ENCODE measurements at regions of chr2 and their contacts with region 1.

Region 1: GRCh38 chr2:235045336-235045972 is 93.6 kb downstream of the SH3BP4 start:
- DNase-seq: peak; percentile 89
- ATAC-seq: peak; percentile 78
- H3K4me3 ChIP-seq: peak overlapping the region in 2 of 5 experiments; percentile 29
- H3K4me3 Mint-ChIP-seq: peak overlapping the region; percentile 81
- H3K27ac ChIP-seq: peak overlapping the region; percentile 79 to 80
- H3K27ac Mint-ChIP-seq: peak overlapping the region; percentile 81
- H3K4me1 ChIP-seq: peaks cover 38 to 50% of the 10 kb centered on the region in 2 donors
- H3K4me1 Mint-ChIP-seq: peaks cover 48% of the 10 kb centered on the region
- H3K27me3 ChIP-seq: no peaks in the 10 kb centered on the region
- H3K27me3 Mint-ChIP-seq: no peaks in the 10 kb centered on the region
- CTCF ChIP-seq: no peak

Region 2: GRCh38 chr2:233867993-233868532 is 1177.4 kb before region 1 on chr2 and contains the start of gene MSL3B:
- CTCF ChIA-PET with region 1: no interaction called
- POLR2A ChIA-PET with region 1: no interaction called
- intact Hi-C with region 1: loop called (anchors 10 kb)
- DNase-seq: peak; percentile 80
- ATAC-seq: peak; percentile 78
- H3K4me3 ChIP-seq: peak within 1 kb of the TSS; percentile 58 to 82 (median 63)
- H3K4me3 Mint-ChIP-seq: peak within 1 kb of the TSS; percentile 94
- H3K27ac ChIP-seq: peak within 1 kb of the TSS; percentile 25 to 61
- H3K27ac Mint-ChIP-seq: peak within 1 kb of the TSS; percentile 85
- H3K4me1 ChIP-seq: peaks cover 0 to 6% of the 10 kb centered on the region in 2 donors
- H3K4me1 Mint-ChIP-seq: peaks cover 15% of the 10 kb centered on the region
- H3K27me3 ChIP-seq: peaks cover 0 to 4% (median under 1%) of the 10 kb centered on the region in 4 experiments
- H3K27me3 Mint-ChIP-seq: peaks cover 11% of the 10 kb centered on the region
- CTCF ChIP-seq: no peak

Region 3: DNA sequence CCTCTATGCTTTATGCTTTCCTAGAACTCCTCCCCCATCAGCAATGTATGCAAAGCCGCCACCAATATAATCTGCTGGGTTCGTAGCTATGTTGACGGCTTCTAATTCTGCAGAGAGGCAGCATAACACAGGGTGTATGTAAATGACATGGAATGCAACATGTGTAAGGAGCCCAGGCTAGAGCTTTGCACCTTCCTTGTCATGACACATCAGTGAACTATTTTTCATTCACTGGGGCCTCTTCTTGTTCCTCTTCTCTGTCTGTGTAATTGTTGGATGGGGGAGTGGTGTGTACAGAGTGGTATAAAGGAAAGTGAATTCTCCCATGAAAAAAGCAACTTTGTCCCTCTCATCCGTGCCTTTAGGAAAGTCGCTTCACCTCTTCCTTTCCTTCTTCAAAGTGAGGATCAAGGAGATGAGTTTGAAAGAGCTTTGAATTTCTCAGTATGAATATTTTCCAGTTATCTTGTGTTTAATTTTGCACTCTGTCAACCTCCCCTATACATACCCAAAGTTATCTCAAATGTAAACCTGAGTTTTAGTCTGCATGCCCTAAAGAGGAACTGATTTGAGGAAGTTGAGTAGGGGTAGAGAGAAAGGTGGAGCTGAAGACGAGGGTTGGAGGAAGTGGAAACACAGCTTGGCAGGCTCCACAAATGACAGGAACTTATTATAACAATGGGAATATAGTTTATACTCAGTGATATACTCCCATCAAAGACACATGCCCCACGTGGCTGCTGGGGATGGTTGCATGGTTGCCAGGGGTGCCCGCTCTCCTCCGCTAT is 473.6 kb before region 1 on chr2:
- CTCF ChIA-PET with region 1: no interaction called
- POLR2A ChIA-PET with region 1: no interaction called
- intact Hi-C with region 1: loop called (anchors 5 kb)
- DNase-seq: peak; percentile 73
- ATAC-seq: peak; percentile 90
- H3K4me3 ChIP-seq: peak overlapping the region in 2 of 5 experiments; percentile 10 to 26
- H3K4me3 Mint-ChIP-seq: peak overlapping the region; percentile 71
- H3K27ac ChIP-seq: peak overlapping the region; percentile 43 to 67
- H3K27ac Mint-ChIP-seq: peak overlapping the region; percentile 84
- H3K4me1 ChIP-seq: peaks cover 55 to 69% of the 10 kb centered on the region in 2 donors
- H3K4me1 Mint-ChIP-seq: peaks cover 72% of the 10 kb centered on the region
- H3K27me3 ChIP-seq: no peaks in the 10 kb centered on the region
- H3K27me3 Mint-ChIP-seq: no peaks in the 10 kb centered on the region
- CTCF ChIP-seq: no peak

Region 4: GRCh38 chr2:234951664-234952269 is 93.7 kb before region 1 on chr2 and contains the start of gene SH3BP4:
- CTCF ChIA-PET with region 1: no interaction called
- POLR2A ChIA-PET with region 1: interaction called, 3 read pairs
- intact Hi-C with region 1: loop called (anchors 10 kb)
- DNase-seq: peak; percentile 64
- ATAC-seq: peak; percentile 94
- H3K4me3 ChIP-seq: peak within 1 kb of the TSS; percentile 37 to 84 (median 53)
- H3K4me3 Mint-ChIP-seq: peak within 1 kb of the TSS; percentile 87
- H3K27ac ChIP-seq: no peak within 1 kb of the TSS
- H3K27ac Mint-ChIP-seq: no peak within 1 kb of the TSS
- H3K4me1 ChIP-seq: peaks cover 18 to 21% of the 10 kb centered on the region in 2 donors
- H3K4me1 Mint-ChIP-seq: peaks cover 18% of the 10 kb centered on the region
- H3K27me3 ChIP-seq: peaks cover 0 to 54% (median 23%) of the 10 kb centered on the region in 4 experiments
- H3K27me3 Mint-ChIP-seq: peaks cover 67% of the 10 kb centered on the region
- CTCF ChIP-seq: no peak
- total RNA-seq, gene SH3BP4: 1.3 and 1.5 TPM in 2 replicates

Region 5: GRCh38 chr2:234993541-234993981 is 51.9 kb before region 1 on chr2:
- CTCF ChIA-PET with region 1: no interaction called
- POLR2A ChIA-PET with region 1: no interaction called
- intact Hi-C with region 1: loop called (anchors 1 kb)
- DNase-seq: peak; percentile 68
- ATAC-seq: peak; percentile 62
- H3K4me3 ChIP-seq: no peak overlapping the region
- H3K4me3 Mint-ChIP-seq: peak overlapping the region; percentile 57
- H3K27ac ChIP-seq: no peak overlapping the region
- H3K27ac Mint-ChIP-seq: peak overlapping the region; percentile 37
- H3K4me1 ChIP-seq: peaks cover 14 to 32% of the 10 kb centered on the region in 2 donors
- H3K4me1 Mint-ChIP-seq: peaks cover 15% of the 10 kb centered on the region
- H3K27me3 ChIP-seq: peaks cover 0 to 6% (median 0%) of the 10 kb centered on the region in 4 experiments
- H3K27me3 Mint-ChIP-seq: peaks cover 8% of the 10 kb centered on the region
- CTCF ChIP-seq: no peak